ENCODE measurements at regions of chr10 and their contacts with region 1.

Region 1: GRCh38 chr10:117174439-117175214 is 22.7 kb upstream of the KCNK18 start:
- DNase-seq: peak; percentile 96

Region 2: GRCh38 chr10:116477986-116478664 is 696.5 kb before region 1 on chr10:
- in situ Hi-C with region 1: no loop called
- DNase-seq: no peak

Region 3: DNA sequence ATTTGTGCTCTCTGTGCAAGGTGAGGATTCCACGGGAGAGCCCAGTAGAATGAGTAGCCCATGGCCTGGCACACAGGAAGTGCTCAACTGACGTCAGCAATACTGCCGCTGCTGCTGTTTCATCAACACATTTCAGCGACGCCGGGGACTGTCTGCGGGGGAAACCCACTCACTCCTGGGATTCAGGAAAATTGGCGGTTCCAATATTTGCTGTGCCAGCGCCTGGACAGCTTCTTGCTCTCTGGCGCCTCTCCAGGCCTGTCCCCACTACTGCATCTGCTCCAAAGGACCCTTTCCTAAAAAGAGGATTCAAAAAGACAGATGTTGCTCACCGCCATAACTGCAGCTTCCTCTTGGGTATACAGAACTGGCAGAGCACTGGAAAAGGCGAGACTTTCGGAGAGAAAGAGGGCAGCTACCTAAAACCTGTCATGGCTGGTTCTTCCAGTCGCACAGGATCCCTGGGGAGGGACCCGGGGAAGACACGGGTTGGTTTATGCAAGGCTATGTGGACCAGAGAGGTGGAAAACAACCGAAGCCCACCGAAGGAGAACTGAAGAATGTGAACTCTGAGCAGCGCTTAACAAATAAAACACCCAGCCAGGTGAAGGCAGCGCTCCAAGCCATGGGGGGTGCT is 365.0 kb before region 1 on chr10:
- in situ Hi-C with region 1: loop called (anchors 25 kb)
- DNase-seq: peak; percentile 3

Region 4: DNA sequence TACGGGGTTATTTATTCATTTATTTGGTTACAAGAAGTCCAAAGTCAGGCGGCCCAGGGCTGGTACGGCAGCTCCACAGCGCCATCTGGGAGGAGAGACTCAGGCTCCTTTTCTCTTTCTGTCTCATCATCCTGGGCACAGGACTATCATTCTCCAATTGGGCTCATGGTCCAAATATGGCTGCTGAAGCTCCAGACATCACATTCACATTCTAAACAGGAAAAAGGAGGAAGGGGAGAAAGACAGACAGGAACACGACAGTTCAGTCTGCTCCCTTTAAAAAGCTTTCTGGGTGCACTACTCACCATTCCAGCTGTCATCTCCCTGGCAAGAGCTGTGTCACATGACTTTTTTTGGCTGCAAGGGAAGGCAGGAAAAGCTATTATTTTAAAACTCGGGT is 275.0 kb after region 1 on chr10:
- in situ Hi-C with region 1: no loop called
- DNase-seq: no peak